BJ (cell line): ENCODE measurements at regions of chr1 and their contacts with region 1.

Region 1: GRCh38 chr1:46477153-46477929 is 12.3 kb upstream of the DMBX1 start:
- DNase-seq: no peak
- H3K4me3 ChIP-seq: no peak overlapping the region
- H3K27me3 ChIP-seq: peaks cover 35% of the 10 kb centered on the region
- CTCF ChIP-seq: peak; percentile 95

Region 2: DNA sequence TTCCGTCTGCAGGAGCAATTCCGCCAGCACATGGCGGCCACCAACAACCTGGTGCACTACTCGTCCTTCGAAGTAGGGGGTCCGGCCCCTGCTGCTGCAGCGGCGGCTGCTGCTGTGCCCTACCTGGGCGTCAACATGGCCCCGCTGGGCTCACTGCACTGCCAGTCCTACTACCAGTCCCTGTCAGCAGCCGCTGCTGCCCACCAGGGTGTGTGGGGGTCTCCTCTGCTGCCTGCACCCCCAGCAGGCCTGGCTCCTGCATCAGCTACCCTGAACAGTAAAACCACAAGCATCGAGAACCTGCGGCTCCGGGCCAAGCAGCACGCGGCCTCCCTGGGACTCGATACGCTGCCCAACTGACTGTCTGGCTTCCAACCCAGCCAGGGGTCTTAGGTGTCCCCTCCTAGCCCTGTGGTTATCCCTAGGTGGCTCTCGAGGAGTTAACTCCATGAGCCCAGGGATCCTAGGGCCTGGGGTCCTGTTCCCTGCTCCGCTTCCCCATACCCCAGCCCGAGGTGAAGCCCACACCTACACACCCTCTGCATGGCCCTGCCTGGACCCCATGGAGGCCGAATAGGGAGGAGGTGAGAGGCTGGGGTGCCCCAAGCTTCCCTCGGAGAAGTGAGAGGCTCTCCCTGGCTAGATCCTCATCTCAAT is 34.9 kb after region 1 on chr1:
- CTCF ChIA-PET with region 1: interaction called, 12 read pairs
- POLR2A ChIA-PET with region 1: no interaction called
- DNase-seq: no peak
- H3K4me3 ChIP-seq: no peak overlapping the region
- H3K27me3 ChIP-seq: peaks cover 14% of the 10 kb centered on the region
- CTCF ChIP-seq: no peak

Region 3: GRCh38 chr1:46527474-46528296 is 50.3 kb after region 1 on chr1:
- CTCF ChIA-PET with region 1: interaction called, 176 read pairs
- POLR2A ChIA-PET with region 1: no interaction called
- DNase-seq: no peak
- H3K4me3 ChIP-seq: no peak overlapping the region
- H3K27me3 ChIP-seq: peaks cover 35% of the 10 kb centered on the region
- CTCF ChIP-seq: peak; percentile 97

Region 4: DNA sequence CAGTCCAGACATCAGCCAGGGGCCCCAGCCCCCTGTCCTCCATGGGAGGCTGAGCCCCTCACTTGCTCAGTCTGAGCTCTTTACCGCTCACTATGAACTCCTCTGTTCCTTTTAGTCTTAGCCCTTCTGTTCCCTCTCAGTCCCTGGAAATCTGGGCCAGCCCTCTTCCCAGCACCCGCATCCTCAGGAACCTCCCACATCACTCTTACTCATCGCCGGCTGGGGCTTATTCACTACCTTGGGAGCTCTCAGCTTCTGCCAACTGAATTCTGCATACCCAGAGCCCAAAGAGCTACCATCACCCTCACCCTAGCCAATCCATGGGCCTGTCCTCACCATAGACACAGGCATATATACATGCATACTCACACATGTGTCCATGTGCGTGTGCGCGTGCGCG is 62.6 kb after region 1 on chr1:
- CTCF ChIA-PET with region 1: interaction called, 176 read pairs
- POLR2A ChIA-PET with region 1: no interaction called
- DNase-seq: no peak
- H3K4me3 ChIP-seq: no peak overlapping the region
- H3K27me3 ChIP-seq: peaks cover 21% of the 10 kb centered on the region
- CTCF ChIP-seq: no peak

Region 5: GRCh38 chr1:47416319-47417169 is 939.2 kb after region 1 on chr1:
- CTCF ChIA-PET with region 1: no interaction called
- POLR2A ChIA-PET with region 1: no interaction called
- DNase-seq: no peak
- H3K4me3 ChIP-seq: peak overlapping the region; percentile 40
- H3K27me3 ChIP-seq: 0 out of 2 replicates have a peak, but pooled peaks cover 1% of the 10 kb centered on the region
- CTCF ChIP-seq: no peak